ENCODE measurements at regions of chr16 and their contacts with region 1.

Region 1: GRCh38 chr16:28063641-28064061 is at the start of gene GSG1L:
- DNase-seq: no peak
- H3K4me3 Mint-ChIP-seq: peak within 1 kb of the TSS; percentile 10
- H3K27ac Mint-ChIP-seq: no peak within 1 kb of the TSS
- H3K4me1 Mint-ChIP-seq: no peaks in the 10 kb centered on the region
- H3K27me3 Mint-ChIP-seq: peaks cover 55% of the 10 kb centered on the region
- total RNA-seq, gene GSG1L: 0.55 TPM in 1 of 2 experiments, not detected in the other

Region 2: GRCh38 chr16:27972500-27972899 is 91.2 kb before region 1 on chr16:
- CTCF ChIA-PET with region 1: interaction called, 104 read pairs
- POLR2A ChIA-PET with region 1: interaction called, 4 read pairs
- DNase-seq: peak; percentile 60
- H3K4me3 Mint-ChIP-seq: no peak overlapping the region
- H3K27ac Mint-ChIP-seq: no peak overlapping the region
- H3K4me1 Mint-ChIP-seq: peaks cover 5% of the 10 kb centered on the region
- H3K27me3 Mint-ChIP-seq: peaks cover 26% of the 10 kb centered on the region

Region 3: DNA sequence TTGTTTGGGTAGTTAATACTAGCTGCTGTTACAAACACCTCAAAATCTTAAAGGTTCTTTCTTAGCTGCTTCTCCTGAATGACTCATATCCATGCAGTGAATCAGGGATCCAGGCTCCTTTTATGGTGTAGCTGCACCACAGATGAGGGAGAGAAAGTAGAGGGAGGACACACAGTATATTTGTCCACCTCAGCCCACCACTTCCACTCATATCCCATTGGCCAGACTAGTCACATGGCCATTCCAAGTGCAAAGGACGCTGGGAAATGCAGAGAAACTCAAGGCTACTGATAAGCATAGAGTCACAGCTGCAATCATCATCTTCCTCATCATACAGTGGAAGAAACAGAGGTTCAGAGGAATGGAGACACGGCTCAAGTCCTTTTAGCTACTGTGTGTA is 64.0 kb before region 1 on chr16:
- CTCF ChIA-PET with region 1: no interaction called
- POLR2A ChIA-PET with region 1: no interaction called
- DNase-seq: no peak
- H3K4me3 Mint-ChIP-seq: no peak overlapping the region
- H3K27ac Mint-ChIP-seq: no peak overlapping the region
- H3K4me1 Mint-ChIP-seq: peaks cover 19% of the 10 kb centered on the region
- H3K27me3 Mint-ChIP-seq: peaks cover 3% of the 10 kb centered on the region

Region 4: GRCh38 chr16:28090646-28091377 is 27.2 kb after region 1 on chr16:
- CTCF ChIA-PET with region 1: no interaction called
- POLR2A ChIA-PET with region 1: no interaction called
- DNase-seq: no peak
- H3K4me3 Mint-ChIP-seq: no peak overlapping the region
- H3K27ac Mint-ChIP-seq: no peak overlapping the region
- H3K4me1 Mint-ChIP-seq: no peaks in the 10 kb centered on the region
- H3K27me3 Mint-ChIP-seq: no peaks in the 10 kb centered on the region

Measured in activated CD4-positive, alpha-beta memory T cell treated with anti-CD3 and anti-CD28 coated beads, Interleukin-2, amount 10 ng/mL, durations not matched to agents 7 days and 5 days (primary cell).